A549 (cell line): ENCODE measurements at regions of chr5 and their contacts with region 1.

Region 1: DNA sequence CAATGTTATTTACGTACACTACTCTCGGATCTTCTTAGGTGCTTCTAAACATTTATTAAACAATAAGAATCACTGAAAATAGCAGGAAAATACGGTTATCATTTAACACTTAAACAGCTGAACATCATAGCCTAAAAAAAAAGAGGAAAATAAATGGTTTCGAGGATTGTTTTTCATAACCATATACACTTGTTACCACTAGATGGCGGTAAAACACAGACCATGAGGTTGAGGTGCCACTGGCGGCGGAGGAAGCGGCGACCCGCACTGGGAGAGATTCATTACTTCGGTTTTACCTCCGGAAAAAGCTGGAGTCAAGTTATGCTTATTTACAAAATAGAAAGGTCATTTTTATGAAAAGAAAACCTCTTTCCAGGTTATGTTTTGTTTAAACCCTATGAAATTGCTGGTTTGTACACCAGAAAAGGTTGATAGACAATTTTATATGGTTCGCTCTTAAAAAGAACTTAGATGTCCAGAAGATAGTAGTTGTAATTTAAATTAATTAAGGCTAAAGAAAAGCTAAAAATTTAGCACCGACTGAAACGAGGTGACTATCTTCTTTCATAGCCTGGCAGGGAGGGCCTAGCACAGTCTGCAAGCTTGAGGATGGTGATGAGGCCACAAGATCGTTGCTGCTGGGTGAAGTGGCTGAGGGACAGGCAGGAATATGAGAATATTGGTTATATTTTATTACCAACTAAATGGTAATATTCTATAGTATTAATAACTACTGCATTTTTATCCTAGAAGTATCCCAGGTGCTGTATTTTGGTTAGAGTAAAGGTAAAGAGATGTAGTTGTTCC is 605.7 kb downstream of the RAB3C start:
- DNase-seq: peak; percentile 37 to 89
- ATAC-seq: peak; percentile 81 to 82; a peak in 5 of 6 replicates
- H3K4me3 ChIP-seq: peak overlapping the region; percentile 25; the same call in 2 of the 3 replicates
- H3K27ac ChIP-seq: peak overlapping the region; percentile 88 to 89
- H3K4me1 ChIP-seq: peaks cover 99% of the 10 kb centered on the region
- CTCF ChIP-seq: peak; percentile 93
- EP300 ChIP-seq: no peak
- POLR2A ChIP-seq: no peak
- RAD21 ChIP-seq: peak; percentile 92 to 96

Region 2: GRCh38 chr5:59216841-59217240 is 28.2 kb after region 1 on chr5:
- CTCF ChIA-PET with region 1: interaction called, 16 read pairs
- POLR2A ChIA-PET with region 1: no interaction called
- DNase-seq: peak in 1 of 2 experiments; percentile 43
- ATAC-seq: peak in 1 of 2 experiments; percentile 14; a peak in 2 of 6 replicates
- H3K4me3 ChIP-seq: no peak overlapping the region
- H3K27ac ChIP-seq: peak overlapping the region; percentile 63 to 79
- H3K4me1 ChIP-seq: peaks cover 99% of the 10 kb centered on the region
- CTCF ChIP-seq: no peak
- EP300 ChIP-seq: no peak
- POLR2A ChIP-seq: no peak
- RAD21 ChIP-seq: no peak

Region 3: DNA sequence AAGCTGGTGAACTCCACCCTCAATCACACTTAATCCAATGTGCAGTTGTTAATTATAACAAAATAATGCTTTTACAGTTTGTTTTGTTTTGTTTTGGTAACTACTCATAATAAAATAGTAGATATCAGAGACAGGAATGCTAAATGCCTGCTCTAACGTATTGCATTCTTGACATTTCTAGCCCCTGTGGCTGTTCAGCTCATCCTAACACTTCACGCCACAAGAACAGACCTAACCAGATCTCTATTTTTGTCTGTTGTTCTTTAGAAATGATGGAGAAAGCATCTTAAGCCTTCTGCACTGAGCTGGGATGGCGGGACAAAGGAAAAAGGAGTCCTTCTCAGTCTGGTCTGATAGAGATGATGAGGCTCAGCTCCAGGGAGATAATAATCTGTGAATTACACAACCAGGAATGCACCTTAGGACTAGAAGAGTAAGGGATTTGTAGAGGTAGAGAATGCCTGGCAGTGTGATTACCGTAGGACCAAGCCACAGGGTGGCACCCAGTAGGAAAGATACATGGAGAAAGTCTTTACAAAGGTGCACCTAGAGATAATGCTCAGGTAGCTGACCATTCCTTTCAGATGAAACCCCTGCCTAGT is 76.1 kb after region 1 on chr5:
- CTCF ChIA-PET with region 1: interaction called, 15 read pairs
- POLR2A ChIA-PET with region 1: no interaction called
- DNase-seq: no peak
- ATAC-seq: peak; percentile 62
- H3K4me3 ChIP-seq: peak overlapping the region; percentile 8; the same call in 1 of the 3 replicates
- H3K27ac ChIP-seq: peak overlapping the region; percentile 80 to 82
- H3K4me1 ChIP-seq: peaks cover 100% of the 10 kb centered on the region
- CTCF ChIP-seq: no peak
- EP300 ChIP-seq: no peak
- POLR2A ChIP-seq: no peak
- RAD21 ChIP-seq: no peak

Region 4: GRCh38 chr5:59351076-59351794 is 162.6 kb after region 1 on chr5:
- CTCF ChIA-PET with region 1: interaction called, 14 read pairs
- POLR2A ChIA-PET with region 1: no interaction called
- DNase-seq: no peak
- ATAC-seq: peak in 1 of 2 experiments; percentile 35; a peak in 2 of 6 replicates
- H3K4me3 ChIP-seq: no peak overlapping the region
- H3K27ac ChIP-seq: peak overlapping the region; percentile 78 to 86; a peak in 4 of 6 replicates
- H3K4me1 ChIP-seq: peaks cover 100% of the 10 kb centered on the region
- CTCF ChIP-seq: no peak; the same call in 2 of the 3 replicates
- EP300 ChIP-seq: no peak
- POLR2A ChIP-seq: no peak
- RAD21 ChIP-seq: no peak

Region 5: DNA sequence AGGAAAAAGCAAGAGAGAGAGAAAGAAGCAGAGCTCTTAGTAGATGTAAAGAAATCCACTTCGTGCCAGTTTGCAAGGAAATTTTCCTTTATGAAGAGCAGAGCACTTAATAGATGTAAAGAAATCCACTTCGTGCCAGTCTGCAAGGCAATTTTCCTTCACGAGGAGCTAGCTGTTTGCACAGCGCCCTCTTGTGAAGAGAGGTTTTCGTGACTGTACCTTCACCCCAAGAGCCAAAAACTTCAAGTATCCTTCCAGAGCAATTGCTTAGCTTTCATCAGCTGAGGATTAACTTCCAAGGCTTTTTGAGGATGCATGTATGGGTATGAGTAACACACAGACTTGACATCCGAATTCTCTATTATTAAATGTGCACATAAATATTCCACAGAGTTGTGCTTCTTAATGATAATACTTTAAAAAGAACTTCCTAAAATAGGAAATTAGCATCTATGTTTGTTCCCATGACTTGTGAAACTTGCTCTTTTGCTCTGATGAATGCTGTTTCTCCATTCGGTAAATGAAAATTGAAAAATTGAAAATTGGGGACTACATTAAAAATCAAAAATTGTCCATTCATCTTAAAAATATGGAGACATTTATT is 179.3 kb after region 1 on chr5:
- CTCF ChIA-PET with region 1: interaction called, 58 read pairs
- POLR2A ChIA-PET with region 1: no interaction called
- DNase-seq: peak in 1 of 2 experiments; percentile 84
- ATAC-seq: peak; percentile 76 to 80; a peak in 5 of 6 replicates
- H3K4me3 ChIP-seq: no peak overlapping the region
- H3K27ac ChIP-seq: peak overlapping the region; percentile 64 to 86
- H3K4me1 ChIP-seq: peaks cover 87% of the 10 kb centered on the region
- CTCF ChIP-seq: peak; percentile 94
- EP300 ChIP-seq: no peak
- POLR2A ChIP-seq: no peak
- RAD21 ChIP-seq: peak; percentile 87